ENCODE measurements at regions of chr18 and their contacts with region 1.

Region 1: GRCh38 chr18:12934454-12935071 is 13.2 kb upstream of the SEH1L start:
- DNase-seq: no peak
- H3K4me3 ChIP-seq: no peak overlapping the region; the same call in 1 of the 2 replicates
- CTCF ChIP-seq: peak; percentile 90

Region 2: GRCh38 chr18:12391618-12392165 is 542.9 kb before region 1 on chr18:
- CTCF ChIA-PET with region 1: interaction called, 25 read pairs
- POLR2A ChIA-PET with region 1: no interaction called
- DNase-seq: no peak
- H3K4me3 ChIP-seq: no peak overlapping the region
- CTCF ChIP-seq: peak; percentile 79

Region 3: GRCh38 chr18:12726774-12727550 is 207.6 kb before region 1 on chr18:
- CTCF ChIA-PET with region 1: interaction called, 307 read pairs
- POLR2A ChIA-PET with region 1: no interaction called
- DNase-seq: no peak
- H3K4me3 ChIP-seq: no peak overlapping the region
- CTCF ChIP-seq: peak; percentile 74

Region 4: DNA sequence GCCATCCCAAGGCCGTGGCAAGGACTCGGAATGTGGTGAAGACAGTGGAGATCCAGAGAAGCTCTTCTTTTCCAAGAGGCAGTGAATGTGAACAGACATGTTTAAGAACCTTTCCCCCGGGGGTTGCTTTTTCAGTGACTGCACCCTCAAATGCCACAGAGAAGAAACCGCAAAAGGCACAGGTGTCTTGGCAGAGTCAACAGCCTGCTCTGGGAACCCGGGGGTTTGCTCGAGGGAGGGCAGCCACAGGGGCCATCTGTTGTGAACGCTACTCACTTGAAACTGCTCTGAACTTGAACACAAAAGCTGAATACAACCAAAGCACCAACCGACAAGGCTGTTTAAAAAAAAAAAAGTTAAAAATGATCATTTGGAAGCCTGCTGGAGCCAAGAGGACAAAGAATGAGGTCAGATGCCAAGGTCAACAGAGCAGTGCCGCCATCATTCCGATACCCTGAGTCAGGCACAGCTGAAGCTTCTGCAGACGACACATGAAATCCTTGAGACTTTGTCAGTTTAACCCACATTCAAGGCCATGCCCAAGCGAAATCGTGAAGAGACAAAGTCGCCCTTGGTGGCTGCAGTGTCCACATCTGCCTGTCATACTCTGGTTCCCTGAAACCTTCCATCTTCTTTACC is 184.4 kb before region 1 on chr18:
- CTCF ChIA-PET with region 1: interaction called, 193 read pairs
- POLR2A ChIA-PET with region 1: no interaction called
- DNase-seq: no peak
- H3K4me3 ChIP-seq: no peak overlapping the region
- CTCF ChIP-seq: no peak

Region 5: GRCh38 chr18:12904012-12904516 is 30.5 kb before region 1 on chr18:
- CTCF ChIA-PET with region 1: interaction called, 22 read pairs
- POLR2A ChIA-PET with region 1: no interaction called
- DNase-seq: no peak
- H3K4me3 ChIP-seq: no peak overlapping the region
- CTCF ChIP-seq: no peak

Region 6: DNA sequence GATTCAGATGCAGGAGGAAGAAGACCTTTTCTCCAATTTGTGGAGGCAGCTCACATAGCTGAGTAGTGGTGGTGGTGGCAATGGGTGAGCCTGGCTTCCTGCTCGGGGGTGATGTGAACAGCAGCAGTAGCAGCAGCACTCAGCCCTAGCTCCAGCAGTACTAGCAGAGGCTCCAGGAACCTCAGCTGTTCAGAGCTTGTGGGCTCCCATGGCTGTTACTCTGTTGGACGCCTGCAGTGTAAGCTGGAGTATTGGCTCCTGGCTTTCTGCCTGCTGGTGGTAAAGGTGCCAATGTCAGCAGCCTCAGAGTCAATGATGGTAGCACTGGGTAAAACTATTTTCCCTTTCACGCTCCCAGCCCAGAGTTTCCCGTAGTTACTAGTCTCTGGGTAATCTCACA is 10.1 kb after region 1 on chr18:
- CTCF ChIA-PET with region 1: interaction called, 57 read pairs
- POLR2A ChIA-PET with region 1: no interaction called
- DNase-seq: no peak
- H3K4me3 ChIP-seq: no peak overlapping the region
- CTCF ChIP-seq: no peak

Region 7: GRCh38 chr18:13003466-13003896 is 68.9 kb after region 1 on chr18:
- CTCF ChIA-PET with region 1: no interaction called
- POLR2A ChIA-PET with region 1: no interaction called
- DNase-seq: no peak
- H3K4me3 ChIP-seq: no peak overlapping the region
- CTCF ChIP-seq: peak; percentile 60

Measured in AG04449 (cell line).